ENCODE measurements at regions of chr7 and their contacts with region 1.

Region 1: GRCh38 chr7:636396-636795 is 90.1 kb upstream of the DNAAF5 start:
- DNase-seq: peak; percentile 76 to 84
- ATAC-seq: no peak
- H3K4me3 ChIP-seq: no peak overlapping the region
- H3K27ac ChIP-seq: no peak overlapping the region
- H3K4me1 ChIP-seq: no peaks in the 10 kb centered on the region
- H3K27me3 ChIP-seq: no peaks in the 10 kb centered on the region

Region 2: GRCh38 chr7:322111-322671 is 314.2 kb before region 1 on chr7:
- intact Hi-C with region 1: loop called (anchors 2 to 5 kb)
- DNase-seq: peak; percentile 62 to 92
- ATAC-seq: peak; percentile 88
- H3K4me3 ChIP-seq: no peak overlapping the region
- H3K27ac ChIP-seq: no peak overlapping the region
- H3K4me1 ChIP-seq: no peaks in the 10 kb centered on the region
- H3K27me3 ChIP-seq: no peaks in the 10 kb centered on the region